ENCODE measurements at regions of chr19 and their contacts with region 1.

Region 1: GRCh38 chr19:40221858-40222837 is 4.0 kb upstream of the TTC9B start:
- DNase-seq: peak; percentile 78 to 90 (median 85)
- ATAC-seq: peak; percentile 91
- H3K4me3 ChIP-seq: no peak overlapping the region
- H3K27ac ChIP-seq: no peak overlapping the region
- H3K4me1 ChIP-seq: peaks cover 26% of the 10 kb centered on the region
- H3K27me3 ChIP-seq: peaks cover 0 to 35% of the 10 kb centered on the region in 2 donors
- CTCF ChIP-seq: peak; percentile 79 to 95 (median 91)
- POLR2A ChIP-seq: no peak

Region 2: GRCh38 chr19:40147693-40148347 is 74.3 kb before region 1 on chr19:
- intact Hi-C with region 1: loop called (anchors 5 kb)
- DNase-seq: peak in 1 of 4 donors; percentile 27
- ATAC-seq: no peak
- H3K4me3 ChIP-seq: no peak overlapping the region
- H3K27ac ChIP-seq: no peak overlapping the region
- H3K4me1 ChIP-seq: no peaks in the 10 kb centered on the region
- H3K27me3 ChIP-seq: peaks cover 0 to 3% of the 10 kb centered on the region in 2 donors
- CTCF ChIP-seq: no peak
- POLR2A ChIP-seq: no peak